ENCODE measurements at regions of chr12 and their contacts with region 1.

Region 1: DNA sequence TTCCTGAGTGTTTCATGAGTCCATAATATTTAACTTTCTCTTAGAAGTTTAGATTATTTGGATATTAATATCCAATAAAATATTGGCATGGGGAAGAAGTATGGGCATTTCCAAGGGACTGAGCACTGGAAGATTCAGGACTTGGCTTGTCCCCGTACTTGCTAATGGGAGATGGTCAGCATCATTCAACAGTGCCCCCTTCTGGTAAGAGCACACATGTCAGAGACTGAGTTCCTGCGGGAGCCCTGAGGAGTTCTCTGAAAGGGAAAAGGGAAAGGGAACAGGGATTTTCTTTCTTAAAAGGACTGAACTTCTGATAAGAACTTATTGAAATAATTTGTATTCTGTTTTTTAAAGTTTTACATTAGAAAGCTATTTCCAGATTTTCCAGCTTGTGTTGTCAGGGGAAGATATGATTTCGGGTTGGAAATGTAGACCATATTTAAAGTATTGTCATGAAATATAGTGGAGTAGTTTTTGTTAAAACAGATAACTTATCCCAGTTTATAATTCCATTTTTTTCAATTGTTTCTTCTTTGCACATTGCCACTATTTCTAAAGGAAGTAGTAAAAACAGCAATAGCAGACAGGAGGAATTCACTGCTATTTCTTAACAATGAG is 59.8 kb upstream of the C12orf71 start:
- DNase-seq: no peak
- H3K4me3 ChIP-seq: no peak overlapping the region
- H3K27ac ChIP-seq: no peak overlapping the region
- H3K4me1 ChIP-seq: peaks cover 0 to 20% (median 10%) of the 10 kb centered on the region in 4 donors
- H3K27me3 ChIP-seq: no peaks in the 10 kb centered on the region
- CTCF ChIP-seq: peak; percentile 78 to 84 (median 81)
- EP300 ChIP-seq: no peak
- POLR2A ChIP-seq: no peak

Region 2: GRCh38 chr12:26937875-26938700 is 204.1 kb before region 1 on chr12 and contains the starts of genes FGFR1OP2 and INTS13:
- intact Hi-C with region 1: loop called (anchors 10 kb)
- DNase-seq: peak; percentile 98
- H3K4me3 ChIP-seq: peak within 1 kb of the TSS; percentile 89 to 96 (median 93)
- H3K27ac ChIP-seq: peak within 1 kb of the TSS; percentile 94 to 97 (median 96)
- H3K4me1 ChIP-seq: peaks cover 40 to 67% (median 63%) of the 10 kb centered on the region in 4 donors
- H3K27me3 ChIP-seq: no peaks in the 10 kb centered on the region
- CTCF ChIP-seq: peak in 1 of 3 experiments; percentile 18
- EP300 ChIP-seq: no peak
- POLR2A ChIP-seq: peak; percentile 95
- total RNA-seq, gene FGFR1OP2: 52.7 to 65.9 (median 59.4) TPM
- total RNA-seq, gene INTS13: 14.2 to 24.9 (median 22.7) TPM

Region 3: GRCh38 chr12:27024291-27024690 is 117.9 kb before region 1 on chr12:
- intact Hi-C with region 1: loop called (anchors 5 kb)
- DNase-seq: no peak
- H3K4me3 ChIP-seq: peak overlapping the region in 1 of 4 donors; percentile 68
- H3K27ac ChIP-seq: no peak overlapping the region
- H3K4me1 ChIP-seq: peaks cover 20 to 29% (median 24%) of the 10 kb centered on the region in 4 donors
- H3K27me3 ChIP-seq: no peaks in the 10 kb centered on the region
- CTCF ChIP-seq: no peak
- EP300 ChIP-seq: no peak
- POLR2A ChIP-seq: no peak

Region 4: DNA sequence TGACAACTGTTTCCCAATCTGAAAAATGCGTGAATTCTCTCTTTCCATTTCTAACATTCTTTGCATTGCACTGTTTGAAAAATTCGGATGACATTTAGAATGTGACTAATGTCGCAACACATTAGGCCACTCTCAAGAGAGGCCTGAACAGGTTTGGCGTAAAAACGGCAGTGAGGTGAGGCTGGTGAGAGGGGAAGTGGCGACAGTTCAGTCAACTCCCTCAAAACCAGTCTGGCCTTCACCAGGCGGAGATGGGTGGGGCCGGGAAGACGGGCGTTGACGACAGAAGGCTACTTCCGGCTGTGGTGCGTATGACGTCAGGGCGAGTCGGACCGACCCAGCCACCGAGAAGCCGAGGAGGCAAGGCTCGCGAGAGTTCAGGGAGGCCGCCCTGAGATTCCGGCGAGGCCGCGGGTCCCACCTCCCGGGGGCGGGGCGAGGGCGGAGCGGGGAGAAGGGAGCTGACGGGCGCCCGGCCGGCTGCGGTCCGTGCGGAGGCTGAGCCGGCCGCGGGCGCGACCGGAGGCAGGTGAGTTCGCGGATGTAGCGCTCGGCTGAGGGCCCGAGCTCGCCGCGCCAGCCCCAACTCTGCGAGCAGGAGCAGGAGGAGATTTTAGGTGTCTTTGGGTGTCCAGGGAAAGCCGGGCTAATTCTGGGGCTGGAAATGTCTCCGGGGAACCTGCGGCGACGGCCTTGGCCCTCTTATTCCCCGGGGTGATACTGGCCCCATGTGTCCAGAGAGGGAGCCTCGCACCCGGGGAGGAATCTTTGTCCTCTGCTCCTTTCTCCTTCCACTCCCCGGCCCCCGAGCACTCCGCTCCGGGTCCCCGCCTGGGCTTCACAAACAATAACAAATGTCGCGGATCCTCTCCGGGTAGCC is 101.8 kb after region 1 on chr12 and contains the start of gene STK38L:
- intact Hi-C with region 1: loop called (anchors 10 kb)
- DNase-seq: peak; percentile 99
- H3K4me3 ChIP-seq: peak within 1 kb of the TSS; percentile 78 to 91 (median 80)
- H3K27ac ChIP-seq: peak within 1 kb of the TSS; percentile 88 to 94 (median 94)
- H3K4me1 ChIP-seq: peaks cover 14 to 43% (median 36%) of the 10 kb centered on the region in 4 donors
- H3K27me3 ChIP-seq: no peaks in the 10 kb centered on the region
- CTCF ChIP-seq: peak; percentile 36 to 42 (median 39)
- EP300 ChIP-seq: peak; percentile 22
- POLR2A ChIP-seq: peak; percentile 92
- total RNA-seq, gene STK38L: 64.6 to 102 (median 82.4) TPM

Region 5: GRCh38 chr12:27277846-27278260 is 135.6 kb after region 1 on chr12:
- intact Hi-C with region 1: no loop called
- DNase-seq: no peak
- H3K4me3 ChIP-seq: no peak overlapping the region
- H3K27ac ChIP-seq: peak overlapping the region; percentile 64 to 75 (median 68)
- H3K4me1 ChIP-seq: peaks cover 74 to 95% (median 87%) of the 10 kb centered on the region in 4 donors
- H3K27me3 ChIP-seq: no peaks in the 10 kb centered on the region
- CTCF ChIP-seq: no peak
- EP300 ChIP-seq: no peak
- POLR2A ChIP-seq: no peak

Measured in esophagus muscularis mucosa (tissue), 4 donors.